ENCODE measurements at regions of chr5 and their contacts with region 1.

Region 1: DNA sequence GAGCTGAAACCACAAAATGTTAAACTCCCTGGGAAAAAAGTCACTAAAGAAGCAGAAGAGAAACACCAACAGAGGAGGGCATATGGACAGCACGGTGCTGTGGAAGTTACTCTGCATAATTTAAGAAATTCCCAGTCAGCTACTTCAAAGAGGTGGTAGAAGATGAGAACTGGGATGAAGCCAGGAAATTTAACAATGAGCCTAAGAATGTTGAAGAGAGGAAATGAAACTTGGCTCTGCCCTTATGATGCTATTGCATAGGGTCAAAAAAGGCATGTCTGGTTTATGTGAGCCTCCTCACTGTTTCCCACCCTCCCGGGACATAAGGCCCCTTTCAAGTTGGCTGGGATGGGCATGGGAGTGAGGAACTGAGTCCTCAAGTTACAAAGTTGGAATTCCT is 25.4 kb upstream of the SNX18 start:
- DNase-seq: no peak
- H3K4me3 Mint-ChIP-seq: no peak overlapping the region
- H3K27ac Mint-ChIP-seq: no peak overlapping the region
- H3K4me1 Mint-ChIP-seq: no peaks in the 10 kb centered on the region
- H3K27me3 Mint-ChIP-seq: no peaks in the 10 kb centered on the region
- CTCF ChIP-seq: no peak

Region 2: DNA sequence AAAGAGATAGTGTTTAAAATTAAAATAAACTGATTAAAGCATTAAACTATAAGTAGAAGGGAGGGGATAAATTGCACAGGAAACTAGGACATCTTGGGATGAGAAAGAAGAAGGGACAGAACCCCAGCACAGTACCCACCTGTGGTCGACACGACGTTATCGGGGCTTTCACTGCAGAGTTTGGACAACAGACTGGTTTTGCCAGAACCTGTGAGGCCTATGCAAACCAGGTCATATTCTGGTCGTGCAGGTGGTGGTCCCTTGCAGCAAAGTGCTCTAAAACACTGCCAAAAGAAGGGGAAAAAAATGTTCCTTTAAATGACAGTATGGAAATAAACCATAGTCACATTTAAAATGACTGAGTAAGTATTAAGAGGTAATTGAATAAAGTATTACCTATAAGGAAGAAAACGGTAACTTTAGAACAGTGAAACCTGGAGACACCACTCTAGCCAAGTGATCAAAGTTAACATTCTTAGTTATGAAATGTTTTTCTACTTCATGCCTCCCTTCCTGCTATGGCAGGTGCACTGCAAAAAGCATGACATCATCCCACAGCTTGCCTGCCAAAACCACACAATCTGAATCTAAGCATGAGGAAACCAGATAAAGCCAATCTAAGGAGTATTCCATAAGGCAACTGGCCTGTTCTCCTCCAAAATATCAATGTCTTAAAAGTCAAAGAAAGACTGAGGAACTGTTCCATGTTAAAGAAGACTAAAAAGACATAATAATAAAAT is 320.4 kb before region 1 on chr5:
- CTCF ChIA-PET with region 1: no interaction called
- POLR2A ChIA-PET with region 1: no interaction called
- intact Hi-C with region 1: no loop called
- DNase-seq: peak; percentile 44
- H3K4me3 Mint-ChIP-seq: no peak overlapping the region
- H3K27ac Mint-ChIP-seq: no peak overlapping the region
- H3K4me1 Mint-ChIP-seq: no peaks in the 10 kb centered on the region
- H3K27me3 Mint-ChIP-seq: no peaks in the 10 kb centered on the region
- CTCF ChIP-seq: no peak

Region 3: GRCh38 chr5:54243473-54244080 is 248.6 kb before region 1 on chr5:
- CTCF ChIA-PET with region 1: interaction called, 134 read pairs
- POLR2A ChIA-PET with region 1: interaction called, 23 read pairs
- intact Hi-C with region 1: loop called (anchors 1 kb)
- DNase-seq: peak; percentile 57
- H3K4me3 Mint-ChIP-seq: no peak overlapping the region
- H3K27ac Mint-ChIP-seq: no peak overlapping the region
- H3K4me1 Mint-ChIP-seq: no peaks in the 10 kb centered on the region
- H3K27me3 Mint-ChIP-seq: no peaks in the 10 kb centered on the region
- CTCF ChIP-seq: peak; percentile 86

Region 4: GRCh38 chr5:54310433-54311175 is 181.6 kb before region 1 on chr5 and contains the start of gene ARL15:
- CTCF ChIA-PET with region 1: interaction called, 15 read pairs
- POLR2A ChIA-PET with region 1: interaction called, 37 read pairs
- intact Hi-C with region 1: loop called (anchors 2 kb)
- DNase-seq: peak; percentile 98
- H3K4me3 Mint-ChIP-seq: peak within 1 kb of the TSS; percentile 88
- H3K27ac Mint-ChIP-seq: peak within 1 kb of the TSS; percentile 86
- H3K4me1 Mint-ChIP-seq: peaks cover 17% of the 10 kb centered on the region
- H3K27me3 Mint-ChIP-seq: no peaks in the 10 kb centered on the region
- CTCF ChIP-seq: no peak
- total RNA-seq, gene ARL15: 10.1 and 11.3 TPM in 2 replicates

Region 5: DNA sequence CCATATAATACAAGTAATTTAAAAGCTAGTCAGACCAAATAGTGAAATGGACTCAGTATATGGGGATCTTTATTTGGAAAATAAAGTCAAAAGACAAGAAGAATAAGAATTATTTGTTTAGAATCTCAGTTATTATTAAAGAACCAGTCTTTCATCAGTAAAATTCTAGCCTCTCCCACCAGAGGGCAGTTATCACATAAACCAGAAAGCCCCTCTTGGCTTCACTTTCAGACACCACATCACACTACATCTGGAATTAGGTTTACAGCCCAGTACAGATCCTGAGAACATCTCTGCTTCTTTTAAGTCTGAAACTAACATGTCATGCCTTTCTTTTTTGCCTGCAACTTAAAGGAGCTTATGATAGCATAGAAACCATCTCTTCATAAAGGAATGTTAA is 48.9 kb before region 1 on chr5:
- CTCF ChIA-PET with region 1: interaction called, 48 read pairs
- POLR2A ChIA-PET with region 1: interaction called, 4 read pairs
- intact Hi-C with region 1: loop called (anchors 1 kb)
- DNase-seq: peak; percentile 33
- H3K4me3 Mint-ChIP-seq: no peak overlapping the region
- H3K27ac Mint-ChIP-seq: no peak overlapping the region
- H3K4me1 Mint-ChIP-seq: no peaks in the 10 kb centered on the region
- H3K27me3 Mint-ChIP-seq: peaks cover 10% of the 10 kb centered on the region
- CTCF ChIP-seq: peak; percentile 43

Region 6: DNA sequence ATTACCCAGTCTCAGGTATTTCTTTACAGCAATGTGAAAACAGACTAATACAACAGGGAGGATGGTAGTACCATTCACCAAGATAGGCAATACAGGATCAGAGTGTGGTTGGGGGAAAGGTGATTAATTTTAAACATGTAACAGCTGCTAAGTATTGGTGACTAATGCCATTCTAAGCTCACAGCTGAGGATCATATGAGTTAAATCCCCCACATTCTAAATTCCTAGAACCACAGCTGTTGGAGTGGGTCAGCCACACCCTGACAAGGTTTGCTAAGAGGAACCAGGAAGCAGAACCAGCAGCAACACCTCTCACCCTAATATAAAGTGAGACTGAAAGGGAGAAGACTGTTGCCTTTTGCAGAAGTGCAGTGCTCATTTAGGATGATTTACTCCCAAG is 11.9 kb before region 1 on chr5:
- CTCF ChIA-PET with region 1: interaction called, 22 read pairs
- POLR2A ChIA-PET with region 1: no interaction called
- intact Hi-C with region 1: no loop called
- DNase-seq: no peak
- H3K4me3 Mint-ChIP-seq: no peak overlapping the region
- H3K27ac Mint-ChIP-seq: no peak overlapping the region
- H3K4me1 Mint-ChIP-seq: no peaks in the 10 kb centered on the region
- H3K27me3 Mint-ChIP-seq: no peaks in the 10 kb centered on the region
- CTCF ChIP-seq: no peak

Region 7: GRCh38 chr5:54524704-54525103 is 32.5 kb after region 1 on chr5:
- CTCF ChIA-PET with region 1: no interaction called
- POLR2A ChIA-PET with region 1: no interaction called
- intact Hi-C with region 1: no loop called
- DNase-seq: no peak
- H3K4me3 Mint-ChIP-seq: no peak overlapping the region
- H3K27ac Mint-ChIP-seq: no peak overlapping the region
- H3K4me1 Mint-ChIP-seq: peaks cover 18% of the 10 kb centered on the region
- H3K27me3 Mint-ChIP-seq: no peaks in the 10 kb centered on the region
- CTCF ChIP-seq: no peak

Region 8: DNA sequence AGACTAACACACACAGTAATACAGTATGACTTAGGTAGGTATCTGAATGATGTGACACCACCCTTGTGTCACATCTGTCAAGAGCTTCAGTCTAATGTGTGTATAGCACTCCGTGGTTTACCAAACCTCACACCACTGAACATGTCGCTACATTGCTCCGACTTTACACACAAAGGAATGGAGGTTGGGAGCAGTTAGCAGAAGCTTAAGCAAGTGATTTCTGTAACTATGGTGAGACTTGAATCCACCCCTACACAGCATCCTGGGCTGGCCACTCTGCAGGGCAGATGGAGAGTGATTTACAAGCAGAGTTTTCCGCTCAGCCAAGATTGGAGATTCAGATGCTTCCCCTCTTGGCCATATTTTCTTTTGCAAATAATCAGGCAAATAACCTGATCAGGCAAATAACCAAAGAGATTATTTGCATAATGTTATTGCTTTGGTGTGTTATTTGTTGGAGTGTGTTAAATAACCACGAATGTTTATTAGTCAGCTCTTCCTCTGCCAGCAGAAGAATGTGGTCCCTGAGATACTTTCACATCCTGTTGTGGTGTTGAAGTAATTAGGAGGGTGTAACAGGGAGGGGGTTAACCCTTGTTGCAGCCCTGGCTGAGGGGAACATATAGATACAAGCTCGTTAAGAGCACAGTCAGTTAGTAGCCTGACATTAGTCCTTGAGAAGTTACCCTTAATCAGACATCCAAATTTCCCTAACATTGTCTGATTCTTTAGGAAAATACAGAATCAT is 118.2 kb after region 1 on chr5:
- CTCF ChIA-PET with region 1: no interaction called
- POLR2A ChIA-PET with region 1: no interaction called
- intact Hi-C with region 1: no loop called
- DNase-seq: no peak
- H3K4me3 Mint-ChIP-seq: no peak overlapping the region
- H3K27ac Mint-ChIP-seq: no peak overlapping the region
- H3K4me1 Mint-ChIP-seq: no peaks in the 10 kb centered on the region
- H3K27me3 Mint-ChIP-seq: no peaks in the 10 kb centered on the region
- CTCF ChIP-seq: no peak

Measured in MCF 10A (cell line).